Mammary epithelial cell (primary cell): ENCODE measurements at regions of chr1 and their contacts with region 1.

Region 1: GRCh38 chr1:31401241-31401640 is 11.8 kb upstream of the SERINC2 start:
- DNase-seq: no peak
- H3K4me3 ChIP-seq: no peak overlapping the region
- H3K27ac ChIP-seq: no peak overlapping the region
- H3K4me1 ChIP-seq: peaks cover 48% of the 10 kb centered on the region
- H3K27me3 ChIP-seq: no peaks in the 10 kb centered on the region
- CTCF ChIP-seq: peak in 1 of 2 donors; percentile 33

Region 2: GRCh38 chr1:31422505-31423319 is 21.5 kb after region 1 on chr1:
- CTCF ChIA-PET with region 1: interaction called, 20 read pairs
- dilution Hi-C with region 1: no loop called
- in situ Hi-C with region 1: no loop called
- intact Hi-C with region 1: loop called (anchors 1 kb)
- DNase-seq: peak; percentile 95
- H3K4me3 ChIP-seq: no peak overlapping the region
- H3K27ac ChIP-seq: peak overlapping the region; percentile 85
- H3K4me1 ChIP-seq: peaks cover 86% of the 10 kb centered on the region
- H3K27me3 ChIP-seq: no peaks in the 10 kb centered on the region
- CTCF ChIP-seq: peak; percentile 96 to 98